Activated CD4-positive, alpha-beta T cell treated with anti-CD3 and anti-CD28 coated beads, Interleukin-2, amount 10 ng/mL, durations not matched to agents 24 days and 14 days (primary cell): ENCODE measurements at regions of chr15 and their contacts with region 1.

Region 1: DNA sequence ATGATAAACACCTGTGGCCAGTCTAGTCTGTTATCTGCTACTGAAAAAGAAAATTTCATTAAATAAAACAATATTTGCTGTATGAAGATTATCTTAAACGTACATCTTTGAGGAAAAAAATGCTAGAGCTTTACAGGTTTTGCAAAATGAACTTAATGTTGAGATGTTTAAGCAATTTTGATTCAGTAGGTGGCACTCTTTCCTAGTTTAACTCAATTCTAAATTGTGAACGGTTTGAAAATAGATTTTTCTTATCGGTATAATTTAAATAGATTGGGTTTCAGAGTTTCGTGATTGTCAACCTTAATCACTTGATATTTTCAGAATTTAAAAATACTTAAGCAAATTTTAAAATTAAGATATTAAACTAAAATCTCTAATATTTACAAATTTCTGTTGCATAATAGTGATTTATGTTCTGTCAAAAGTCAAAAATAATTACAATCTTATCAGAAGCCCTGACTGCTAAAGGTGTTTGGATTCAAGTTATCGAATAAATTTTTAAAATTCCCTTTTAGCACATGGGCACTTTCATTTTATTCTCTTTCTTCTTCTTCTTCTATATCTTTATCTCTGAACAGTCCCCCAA is 7.0 kb upstream of the RNF111 start:
- DNase-seq: no peak
- H3K4me3 Mint-ChIP-seq: no peak overlapping the region
- H3K27ac Mint-ChIP-seq: no peak overlapping the region
- H3K4me1 Mint-ChIP-seq: peaks cover 33% of the 10 kb centered on the region
- H3K27me3 Mint-ChIP-seq: peaks cover 15% of the 10 kb centered on the region

Region 2: DNA sequence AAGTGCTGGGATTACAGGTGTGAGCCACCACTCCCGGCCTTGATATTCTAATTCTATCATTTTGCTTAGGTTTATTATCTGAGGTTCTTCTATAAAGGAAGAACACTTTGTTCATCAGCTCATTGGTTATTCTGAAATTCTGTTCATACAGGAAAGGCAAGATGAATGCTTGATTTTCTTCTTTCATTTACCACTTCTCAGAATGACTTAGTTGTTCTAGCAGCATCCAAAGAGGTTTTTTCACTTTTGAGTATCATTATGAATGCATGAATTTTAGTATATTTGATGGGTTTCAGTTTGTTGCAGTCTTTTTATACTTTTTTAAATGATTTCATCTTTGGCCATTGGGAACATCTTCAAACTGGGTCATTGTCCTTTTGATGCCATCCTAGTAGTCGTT is 58.8 kb after region 1 on chr15:
- intact Hi-C with region 1: loop called (anchors 1 kb)
- DNase-seq: no peak
- H3K4me3 Mint-ChIP-seq: peak overlapping the region; percentile 49
- H3K27ac Mint-ChIP-seq: peak overlapping the region; percentile 80
- H3K4me1 Mint-ChIP-seq: peaks cover 43% of the 10 kb centered on the region
- H3K27me3 Mint-ChIP-seq: no peaks in the 10 kb centered on the region

Region 3: DNA sequence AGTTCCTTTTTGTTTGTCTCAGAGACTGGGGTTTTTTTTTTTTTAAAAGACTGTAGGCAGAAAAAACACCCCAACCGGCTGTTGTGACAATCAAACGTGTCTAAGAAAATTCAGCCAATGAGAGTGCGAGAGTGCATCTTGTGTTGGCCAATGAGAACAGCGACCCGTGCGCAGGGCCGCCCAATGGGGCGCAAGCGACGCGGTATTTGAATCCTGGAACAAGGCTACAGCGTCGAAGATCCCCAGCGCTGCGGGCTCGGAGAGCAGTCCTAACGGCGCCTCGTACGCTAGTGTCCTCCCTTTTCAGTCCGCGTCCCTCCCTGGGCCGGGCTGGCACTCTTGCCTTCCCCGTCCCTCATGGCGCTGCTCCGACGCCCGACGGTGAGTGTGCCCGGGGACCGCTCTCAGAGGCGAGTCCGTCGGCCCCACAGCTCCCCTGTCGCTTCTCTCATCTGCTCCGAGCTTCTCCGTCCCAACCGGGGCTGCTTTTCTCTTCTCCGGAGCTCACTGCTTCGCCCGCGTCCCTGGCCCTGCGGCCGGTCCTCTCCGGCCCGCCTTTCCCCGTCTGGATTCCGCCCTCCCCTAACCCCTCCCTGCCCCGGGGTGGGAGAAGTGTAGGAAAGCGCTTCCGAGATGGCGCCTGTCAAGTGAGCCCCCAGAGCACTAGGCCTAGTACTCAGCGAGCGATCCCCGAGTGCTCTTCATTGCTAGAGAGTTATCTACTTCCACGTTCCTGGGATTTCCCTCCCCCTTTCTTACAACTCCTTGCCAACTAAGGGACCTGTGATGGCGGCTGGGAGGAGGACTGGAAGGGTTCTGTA is 124.7 kb after region 1 on chr15 and contains the start of gene CCNB2:
- intact Hi-C with region 1: loop called (anchors 2 kb)
- DNase-seq: peak; percentile 96
- H3K4me3 Mint-ChIP-seq: peak within 1 kb of the TSS; percentile 85
- H3K27ac Mint-ChIP-seq: peak within 1 kb of the TSS; percentile 98
- H3K4me1 Mint-ChIP-seq: peaks cover 28% of the 10 kb centered on the region
- H3K27me3 Mint-ChIP-seq: no peaks in the 10 kb centered on the region
- total RNA-seq, gene CCNB2: 38.6 and 39.2 TPM in 2 replicates

Region 4: GRCh38 chr15:59299929-59300617 is 319.6 kb after region 1 on chr15:
- intact Hi-C with region 1: loop called (anchors 2 kb)
- DNase-seq: peak; percentile 91
- H3K4me3 Mint-ChIP-seq: peak overlapping the region; percentile 80
- H3K27ac Mint-ChIP-seq: peak overlapping the region; percentile 86
- H3K4me1 Mint-ChIP-seq: peaks cover 55% of the 10 kb centered on the region
- H3K27me3 Mint-ChIP-seq: no peaks in the 10 kb centered on the region

Region 5: GRCh38 chr15:59516655-59517461 is 536.4 kb after region 1 on chr15:
- intact Hi-C with region 1: no loop called
- DNase-seq: no peak
- H3K4me3 Mint-ChIP-seq: no peak overlapping the region
- H3K27ac Mint-ChIP-seq: no peak overlapping the region
- H3K4me1 Mint-ChIP-seq: peaks cover 4% of the 10 kb centered on the region
- H3K27me3 Mint-ChIP-seq: peaks cover 22% of the 10 kb centered on the region